Activated CD8-positive, alpha-beta memory T cell treated with anti-CD3 and anti-CD28 coated beads, Interleukin-2, amount 10 ng/mL, durations not matched to agents 7 days and 5 days (primary cell): ENCODE measurements at regions of chr7 and their contacts with region 1.

Region 1: GRCh38 chr7:3065724-3066143 is 22.1 kb upstream of the CARD11 start:
- DNase-seq: peak; percentile 88
- ATAC-seq: peak; percentile 45
- H3K4me3 Mint-ChIP-seq: peak overlapping the region; percentile 51
- H3K27ac Mint-ChIP-seq: peak overlapping the region; percentile 94
- H3K4me1 Mint-ChIP-seq: peaks cover 88% of the 10 kb centered on the region
- H3K27me3 Mint-ChIP-seq: no peaks in the 10 kb centered on the region

Region 2: GRCh38 chr7:2894118-2894940 is 171.4 kb before region 1 on chr7:
- CTCF ChIA-PET with region 1: interaction called, 10 read pairs
- DNase-seq: peak; percentile 83
- ATAC-seq: peak; percentile 78
- H3K4me3 Mint-ChIP-seq: peak overlapping the region; percentile 86
- H3K27ac Mint-ChIP-seq: peak overlapping the region; percentile 94
- H3K4me1 Mint-ChIP-seq: peaks cover 22% of the 10 kb centered on the region
- H3K27me3 Mint-ChIP-seq: no peaks in the 10 kb centered on the region

Region 3: GRCh38 chr7:3042861-3043489 is 22.8 kb before region 1 on chr7:
- CTCF ChIA-PET with region 1: interaction called, 28 read pairs
- DNase-seq: peak; percentile 88
- ATAC-seq: peak; percentile 82
- H3K4me3 Mint-ChIP-seq: peak overlapping the region; percentile 99
- H3K27ac Mint-ChIP-seq: peak overlapping the region; percentile 95
- H3K4me1 Mint-ChIP-seq: peaks cover 49% of the 10 kb centered on the region
- H3K27me3 Mint-ChIP-seq: no peaks in the 10 kb centered on the region

Region 4: GRCh38 chr7:3092468-3092867 is 26.7 kb after region 1 on chr7:
- CTCF ChIA-PET with region 1: interaction called, 168 read pairs
- DNase-seq: peak; percentile 94
- ATAC-seq: peak; percentile 81
- H3K4me3 Mint-ChIP-seq: peak overlapping the region; percentile 26
- H3K27ac Mint-ChIP-seq: peak overlapping the region; percentile 90
- H3K4me1 Mint-ChIP-seq: peaks cover 69% of the 10 kb centered on the region
- H3K27me3 Mint-ChIP-seq: no peaks in the 10 kb centered on the region

Region 5: DNA sequence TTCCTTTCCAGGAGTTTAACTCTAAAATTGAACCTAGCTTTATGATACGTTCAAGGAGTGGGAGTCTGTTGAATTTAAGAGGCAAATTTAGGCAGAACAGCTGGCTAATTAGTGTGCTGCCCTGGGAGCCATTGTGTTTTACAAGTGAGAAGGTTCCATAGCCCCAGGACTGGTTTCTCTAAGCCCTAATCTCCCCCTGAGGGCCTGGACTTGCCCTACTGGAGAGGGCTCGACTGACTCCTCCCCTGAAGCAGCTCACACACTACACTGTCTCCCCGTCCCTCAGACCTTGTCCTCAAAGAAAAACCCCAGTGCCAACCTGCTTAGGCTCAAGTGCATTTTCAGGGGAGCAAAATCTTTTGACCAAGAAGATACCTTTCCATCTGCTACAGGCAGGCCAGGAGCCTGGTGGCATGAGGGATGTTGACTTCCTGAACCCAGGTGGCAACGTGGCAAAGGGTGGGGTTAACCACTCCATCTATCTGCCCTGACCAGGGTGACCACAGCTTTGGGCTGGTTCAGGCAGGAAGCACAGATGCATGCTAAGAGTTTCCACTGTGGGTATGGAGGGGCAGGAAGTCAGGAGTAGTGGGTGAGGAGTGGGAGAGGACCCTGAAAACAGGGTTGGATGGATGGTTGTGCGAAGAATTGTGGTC is 46.9 kb after region 1 on chr7:
- CTCF ChIA-PET with region 1: interaction called, 27 read pairs
- DNase-seq: peak; percentile 89
- ATAC-seq: peak; percentile 73
- H3K4me3 Mint-ChIP-seq: peak overlapping the region; percentile 10
- H3K27ac Mint-ChIP-seq: peak overlapping the region; percentile 81
- H3K4me1 Mint-ChIP-seq: peaks cover 93% of the 10 kb centered on the region
- H3K27me3 Mint-ChIP-seq: no peaks in the 10 kb centered on the region

Region 6: DNA sequence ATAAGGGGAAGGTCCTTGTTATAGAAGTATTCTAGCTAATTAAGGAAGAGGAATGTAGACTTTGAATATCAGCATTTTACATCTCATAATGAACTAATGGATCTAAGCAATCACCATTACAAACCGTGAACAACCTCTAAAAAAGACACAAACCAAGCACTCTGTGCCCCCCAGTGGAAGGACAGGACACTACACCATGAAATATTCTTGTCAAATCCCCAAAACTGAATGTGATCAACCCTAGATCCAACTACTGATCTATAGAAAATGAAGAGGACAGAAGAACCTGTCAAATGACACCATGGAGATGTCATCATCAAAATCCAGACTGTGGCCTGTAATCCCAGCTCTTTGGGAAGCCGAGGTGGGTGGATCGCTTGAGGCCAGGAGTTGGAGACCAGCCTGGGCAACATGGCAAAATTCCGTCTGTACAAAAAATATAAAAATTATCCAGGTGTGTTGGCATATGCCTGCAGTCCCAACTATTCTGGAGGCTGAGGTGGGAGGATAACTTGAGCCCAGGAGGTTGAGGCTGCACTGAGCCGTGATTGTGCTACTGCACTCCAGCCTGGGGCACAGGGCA is 89.3 kb after region 1 on chr7:
- CTCF ChIA-PET with region 1: interaction called, 51 read pairs
- DNase-seq: peak; percentile 79
- ATAC-seq: peak; percentile 83
- H3K4me3 Mint-ChIP-seq: no peak overlapping the region
- H3K27ac Mint-ChIP-seq: peak overlapping the region; percentile 22
- H3K4me1 Mint-ChIP-seq: peaks cover 31% of the 10 kb centered on the region
- H3K27me3 Mint-ChIP-seq: peaks cover 7% of the 10 kb centered on the region